ENCODE measurements at regions of chr6 and their contacts with region 1.

Region 1: DNA sequence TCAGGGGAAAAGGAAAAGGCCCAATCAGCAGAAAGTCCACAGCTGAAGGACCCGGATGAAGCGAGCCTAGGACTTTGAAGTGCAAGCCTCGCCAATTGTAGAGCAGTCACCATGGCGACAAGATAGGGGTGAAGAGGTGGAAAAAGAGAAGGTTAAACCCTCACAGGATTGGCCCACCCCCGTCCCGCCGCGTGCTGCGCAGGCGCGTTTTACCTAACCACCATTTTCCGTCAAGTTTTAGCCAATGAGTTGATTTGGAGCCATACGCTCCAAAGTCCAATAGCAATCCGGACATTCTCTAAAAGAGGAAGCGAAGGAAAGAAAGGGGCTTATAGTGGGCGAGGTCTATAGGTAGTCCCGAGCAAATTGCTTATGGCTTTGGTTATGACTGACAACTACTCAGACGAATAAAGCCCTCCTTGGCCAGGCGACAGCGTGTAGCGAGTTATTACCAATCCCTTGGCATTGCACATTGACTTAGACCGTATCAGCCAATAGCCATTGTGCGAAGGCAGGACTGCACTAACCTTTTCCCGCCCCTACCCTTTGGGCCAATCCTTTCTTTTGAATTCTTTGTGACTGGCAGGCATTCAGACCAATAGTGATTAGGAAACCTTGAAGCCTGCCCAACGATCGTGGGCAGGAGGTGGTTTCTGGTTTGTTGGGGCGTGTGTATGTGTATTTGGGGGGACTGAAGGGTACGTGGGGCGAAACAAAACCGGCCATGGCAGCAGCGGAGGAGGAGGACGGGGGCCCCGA is at the start of gene RNF5:
- DNase-seq: peak; percentile 96
- H3K4me3 Mint-ChIP-seq: peak within 1 kb of the TSS; percentile 85
- H3K27ac Mint-ChIP-seq: peak within 1 kb of the TSS; percentile 96
- H3K4me1 Mint-ChIP-seq: peaks cover 65% of the 10 kb centered on the region
- H3K27me3 Mint-ChIP-seq: no peaks in the 10 kb centered on the region
- total RNA-seq, gene RNF5: 60.8 to 63.8 TPM

Region 2: GRCh38 chr6:31971993-31972708 is 205.8 kb before region 1 on chr6 and contains the start of gene DXO:
- CTCF ChIA-PET with region 1: no interaction called
- POLR2A ChIA-PET with region 1: no interaction called
- intact Hi-C with region 1: loop called (anchors 10 kb)
- DNase-seq: peak; percentile 99
- H3K4me3 Mint-ChIP-seq: peak within 1 kb of the TSS; percentile 95
- H3K27ac Mint-ChIP-seq: peak within 1 kb of the TSS; percentile 100
- H3K4me1 Mint-ChIP-seq: peaks cover 39% of the 10 kb centered on the region
- H3K27me3 Mint-ChIP-seq: no peaks in the 10 kb centered on the region
- total RNA-seq, gene DXO: 10.8 to 12.3 TPM

Region 3: GRCh38 chr6:32127717-32128592 is 50.0 kb before region 1 on chr6 and contains the start of gene ATF6B:
- CTCF ChIA-PET with region 1: interaction called, 3 read pairs
- POLR2A ChIA-PET with region 1: interaction called, 9 read pairs
- intact Hi-C with region 1: loop called (anchors 1 kb)
- DNase-seq: peak; percentile 99
- H3K4me3 Mint-ChIP-seq: peak within 1 kb of the TSS; percentile 99
- H3K27ac Mint-ChIP-seq: peak within 1 kb of the TSS; percentile 96
- H3K4me1 Mint-ChIP-seq: peaks cover 40% of the 10 kb centered on the region
- H3K27me3 Mint-ChIP-seq: no peaks in the 10 kb centered on the region
- total RNA-seq, gene ATF6B: 67.4 to 80.9 TPM

Region 4: GRCh38 chr6:32153564-32154513 is 24.1 kb before region 1 on chr6 and contains the start of gene PPT2:
- CTCF ChIA-PET with region 1: no interaction called
- POLR2A ChIA-PET with region 1: no interaction called
- intact Hi-C with region 1: loop called (anchors 1 kb)
- DNase-seq: peak; percentile 87
- H3K4me3 Mint-ChIP-seq: peak within 1 kb of the TSS; percentile 98
- H3K27ac Mint-ChIP-seq: peak within 1 kb of the TSS; percentile 79
- H3K4me1 Mint-ChIP-seq: peaks cover 35% of the 10 kb centered on the region
- H3K27me3 Mint-ChIP-seq: peaks cover 17% of the 10 kb centered on the region
- total RNA-seq, gene PPT2: 9.5 to 9.9 TPM

Region 5: DNA sequence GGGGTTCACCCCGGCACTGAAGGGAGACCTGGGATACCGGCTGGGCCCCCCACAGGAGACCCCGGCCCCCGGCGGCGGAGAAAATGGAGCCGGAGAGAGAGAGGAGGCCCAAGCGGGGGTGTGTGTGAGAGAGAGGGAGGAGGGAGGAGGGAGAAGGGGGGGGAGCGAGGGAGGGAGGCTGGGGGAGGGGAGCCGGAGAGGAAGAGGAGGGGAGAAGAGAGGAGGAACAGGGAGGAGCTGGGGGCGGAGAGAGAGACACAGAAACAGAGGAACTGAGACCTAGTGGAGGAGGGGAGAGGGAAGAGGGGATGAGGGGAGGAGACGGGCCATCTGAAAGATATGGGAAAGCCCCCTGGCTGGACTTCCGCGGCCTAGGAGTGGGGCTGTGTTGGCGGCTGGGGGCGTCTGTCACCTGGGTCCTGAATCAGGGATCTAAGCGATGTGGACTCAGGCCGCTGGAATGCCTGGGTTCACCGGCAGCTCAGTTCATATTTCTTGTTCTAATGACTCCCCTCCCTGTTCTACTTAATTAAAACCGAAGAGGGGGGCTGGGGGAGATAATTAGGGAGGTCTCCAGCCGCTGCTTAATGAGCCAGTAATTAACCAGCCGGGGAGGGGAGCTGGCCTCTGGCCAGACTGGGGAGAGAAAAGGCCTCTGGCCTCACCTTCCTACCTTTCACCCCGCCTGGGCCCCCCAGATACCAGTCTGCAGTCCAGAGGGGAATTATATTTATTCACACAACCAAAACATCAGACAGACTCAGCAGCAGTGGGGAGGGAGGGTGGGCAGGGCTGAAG is 12.3 kb after region 1 on chr6 and contains the start of gene PBX2:
- CTCF ChIA-PET with region 1: interaction called, 11 read pairs
- POLR2A ChIA-PET with region 1: interaction called, 57 read pairs
- intact Hi-C with region 1: loop called (anchors 1 kb)
- DNase-seq: peak; percentile 91
- H3K4me3 Mint-ChIP-seq: peak within 1 kb of the TSS; percentile 92
- H3K27ac Mint-ChIP-seq: peak within 1 kb of the TSS; percentile 98
- H3K4me1 Mint-ChIP-seq: peaks cover 56% of the 10 kb centered on the region
- H3K27me3 Mint-ChIP-seq: no peaks in the 10 kb centered on the region
- total RNA-seq, gene PBX2: 63.4 to 65.9 TPM

Region 6: GRCh38 chr6:32195652-32195901 is 17.6 kb after region 1 on chr6:
- CTCF ChIA-PET with region 1: interaction called, 11 read pairs
- POLR2A ChIA-PET with region 1: interaction called, 57 read pairs
- intact Hi-C with region 1: loop called (anchors 1 kb)
- DNase-seq: peak; percentile 100
- H3K4me3 Mint-ChIP-seq: peak overlapping the region; percentile 96
- H3K27ac Mint-ChIP-seq: peak overlapping the region; percentile 98
- H3K4me1 Mint-ChIP-seq: peaks cover 23% of the 10 kb centered on the region
- H3K27me3 Mint-ChIP-seq: no peaks in the 10 kb centered on the region